ENCODE measurements at regions of chr16 and their contacts with region 1.

Region 1: DNA sequence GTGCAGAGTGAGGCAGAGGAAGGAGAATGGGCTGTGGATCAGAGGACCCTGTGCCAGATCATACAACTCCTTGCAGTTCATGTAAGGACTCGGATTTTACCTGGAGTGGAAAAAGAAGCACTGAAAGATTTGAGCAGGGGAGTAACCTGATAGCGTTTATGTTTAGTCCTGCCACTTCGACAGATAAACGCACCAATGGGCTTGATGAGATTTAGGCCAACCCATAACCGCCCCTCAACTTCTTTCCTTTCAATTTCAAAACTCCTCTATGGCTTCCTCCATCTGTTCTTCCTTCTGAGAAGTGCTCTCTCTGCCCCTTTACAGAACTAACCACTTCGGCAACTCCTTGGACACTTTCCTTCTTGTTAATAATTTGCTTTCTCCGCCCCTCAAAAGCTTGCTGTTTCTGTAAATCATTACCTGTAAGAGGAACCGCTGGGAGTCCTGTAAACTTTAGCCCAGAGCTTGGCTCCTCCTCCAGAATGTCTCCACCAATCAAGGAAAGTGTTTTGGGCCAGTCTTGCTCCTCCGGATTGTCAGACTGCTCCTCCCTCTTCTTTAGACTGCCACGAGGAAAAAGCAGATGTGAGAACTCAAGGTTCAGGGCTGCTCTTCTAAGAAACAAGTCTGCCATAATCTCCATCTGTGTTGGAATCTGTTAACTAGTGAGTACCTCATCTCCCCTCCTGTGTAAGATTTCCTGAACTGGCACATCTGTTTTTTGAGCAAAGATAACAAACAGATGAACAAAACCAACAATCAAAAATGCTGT is at the start of gene ACSM3:
- DNase-seq: peak; percentile 82
- ATAC-seq: peak; percentile 100
- H3K4me3 Mint-ChIP-seq: peak within 1 kb of the TSS; percentile 80
- H3K27ac Mint-ChIP-seq: peak within 1 kb of the TSS; percentile 88
- H3K4me1 Mint-ChIP-seq: peaks cover 23% of the 10 kb centered on the region
- H3K27me3 Mint-ChIP-seq: no peaks in the 10 kb centered on the region
- total RNA-seq, gene ACSM3: 5.1 TPM

Region 2: GRCh38 chr16:20510323-20510722 is 253.3 kb before region 1 on chr16:
- CTCF ChIA-PET with region 1: no interaction called
- POLR2A ChIA-PET with region 1: no interaction called
- DNase-seq: no peak
- ATAC-seq: no peak
- H3K4me3 Mint-ChIP-seq: no peak overlapping the region
- H3K27ac Mint-ChIP-seq: no peak overlapping the region
- H3K4me1 Mint-ChIP-seq: no peaks in the 10 kb centered on the region
- H3K27me3 Mint-ChIP-seq: no peaks in the 10 kb centered on the region

Region 3: GRCh38 chr16:20741554-20742285 is 21.9 kb before region 1 on chr16 and contains the start of gene THUMPD1:
- CTCF ChIA-PET with region 1: interaction called, 10 read pairs
- POLR2A ChIA-PET with region 1: interaction called, 19 read pairs
- DNase-seq: peak; percentile 99
- ATAC-seq: peak; percentile 96
- H3K4me3 Mint-ChIP-seq: peak within 1 kb of the TSS; percentile 94
- H3K27ac Mint-ChIP-seq: peak within 1 kb of the TSS; percentile 98
- H3K4me1 Mint-ChIP-seq: peaks cover 25% of the 10 kb centered on the region
- H3K27me3 Mint-ChIP-seq: no peaks in the 10 kb centered on the region
- total RNA-seq, gene THUMPD1: 39.2 to 43.8 TPM

Region 4: DNA sequence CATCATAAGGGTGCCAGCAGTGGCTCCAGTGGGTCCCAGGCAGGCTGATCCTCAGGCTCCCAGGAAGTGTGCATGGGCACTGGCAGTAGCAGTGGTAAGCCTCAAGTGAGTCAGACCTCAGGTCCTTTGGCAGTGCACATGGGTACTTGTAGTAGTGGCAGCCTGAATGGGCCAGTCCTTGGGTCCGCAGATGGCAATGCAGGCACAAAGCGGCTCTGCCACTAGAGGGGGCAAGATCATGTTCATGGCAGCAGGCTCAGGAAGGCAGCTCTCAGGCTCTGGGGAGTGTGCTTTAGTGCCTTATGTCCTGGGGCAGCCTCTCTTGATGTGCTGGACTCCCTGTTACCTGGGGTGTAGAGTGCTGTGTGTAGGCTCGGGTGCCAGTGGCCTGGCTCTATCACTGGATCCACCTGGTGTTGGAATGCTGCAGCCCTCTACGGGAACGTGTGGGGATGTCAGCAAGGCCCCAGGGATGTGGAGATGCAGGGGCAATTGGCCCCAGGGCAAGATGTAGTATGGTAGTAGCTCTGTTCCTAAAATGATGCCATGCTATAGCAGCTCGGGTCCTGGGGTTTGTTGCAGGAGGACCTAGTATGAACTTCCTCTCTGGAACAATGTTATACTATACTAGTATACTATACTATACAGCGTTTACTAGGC is 11.2 kb after region 1 on chr16:
- CTCF ChIA-PET with region 1: interaction called, 35 read pairs
- POLR2A ChIA-PET with region 1: no interaction called
- DNase-seq: peak; percentile 77
- ATAC-seq: peak; percentile 98
- H3K4me3 Mint-ChIP-seq: no peak overlapping the region
- H3K27ac Mint-ChIP-seq: no peak overlapping the region
- H3K4me1 Mint-ChIP-seq: no peaks in the 10 kb centered on the region
- H3K27me3 Mint-ChIP-seq: no peaks in the 10 kb centered on the region

Region 5: DNA sequence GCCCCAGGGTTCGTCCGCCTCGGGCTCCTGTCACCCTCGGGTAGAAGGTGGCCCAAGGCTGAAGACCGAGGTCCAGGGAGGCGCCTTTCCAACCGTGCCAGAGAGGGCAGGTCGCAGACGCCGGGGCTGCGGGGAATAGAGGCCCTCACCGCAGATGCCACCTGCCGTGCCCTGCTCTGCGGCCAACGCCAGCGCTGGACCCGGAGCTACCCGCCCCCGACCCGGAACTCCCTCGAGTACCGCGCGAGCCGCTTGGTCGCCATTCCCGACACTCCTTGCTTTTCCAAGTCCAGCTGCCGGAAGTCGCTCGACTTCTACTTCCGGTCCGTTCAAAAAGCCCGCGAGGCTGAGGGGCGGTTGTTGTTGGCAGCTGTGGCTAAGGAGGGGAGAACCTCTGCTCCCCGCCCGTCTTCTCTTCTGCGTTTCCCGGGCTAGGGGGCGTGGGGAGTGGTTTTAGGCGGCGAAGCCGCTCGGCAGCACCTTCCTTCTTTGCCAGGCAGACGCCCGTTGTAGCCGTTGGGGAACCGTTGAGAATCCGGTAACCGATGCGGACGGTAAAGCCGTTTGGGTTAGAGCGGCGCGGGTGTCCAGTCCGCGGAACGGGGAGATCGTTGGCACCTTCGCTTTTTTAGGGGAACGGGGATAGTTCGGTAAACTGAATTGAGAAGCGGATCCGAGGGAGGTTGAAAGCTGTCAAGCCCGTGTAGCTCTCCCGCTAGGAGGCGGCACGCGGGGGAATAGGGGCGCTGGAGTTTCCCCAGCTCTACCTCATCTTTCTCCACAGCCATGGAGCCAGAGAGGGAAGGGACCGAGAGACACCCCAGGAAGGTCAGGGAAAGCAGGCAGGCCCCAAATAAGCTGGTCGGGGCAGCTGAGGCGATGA is 42.8 kb after region 1 on chr16 and contains the starts of genes ERI2 and REXO5:
- CTCF ChIA-PET with region 1: no interaction called
- POLR2A ChIA-PET with region 1: interaction called, 11 read pairs
- DNase-seq: peak; percentile 84
- ATAC-seq: peak; percentile 90
- H3K4me3 Mint-ChIP-seq: peak within 1 kb of the TSS; percentile 97
- H3K27ac Mint-ChIP-seq: peak within 1 kb of the TSS; percentile 95
- H3K4me1 Mint-ChIP-seq: peaks cover 25% of the 10 kb centered on the region
- H3K27me3 Mint-ChIP-seq: no peaks in the 10 kb centered on the region
- total RNA-seq, gene ERI2: 15.0 to 15.4 TPM
- total RNA-seq, gene REXO5: 10.6 to 11.2 TPM

Measured in activated CD8-positive, alpha-beta T cell treated with anti-CD3 and anti-CD28 coated beads, Interleukin-2, amount 10 ng/mL, durations not matched to agents 7 days and 5 days (primary cell).